ENCODE measurements at regions of chr12 and their contacts with region 1.

Region 1: GRCh38 chr12:15910864-15911721 is at the start of gene DERA:
- DNase-seq: peak; percentile 78
- H3K4me3 Mint-ChIP-seq: peak within 1 kb of the TSS; percentile 88
- H3K27ac Mint-ChIP-seq: peak within 1 kb of the TSS; percentile 88
- H3K4me1 Mint-ChIP-seq: peaks cover 5% of the 10 kb centered on the region
- H3K27me3 Mint-ChIP-seq: no peaks in the 10 kb centered on the region
- CTCF ChIP-seq: no peak
- total RNA-seq, gene DERA: 39.1 and 40.8 TPM in 2 replicates

Region 2: GRCh38 chr12:15393037-15393436 is 518.1 kb before region 1 on chr12:
- CTCF ChIA-PET with region 1: no interaction called
- POLR2A ChIA-PET with region 1: no interaction called
- intact Hi-C with region 1: no loop called
- DNase-seq: no peak
- H3K4me3 Mint-ChIP-seq: no peak overlapping the region
- H3K27ac Mint-ChIP-seq: no peak overlapping the region
- H3K4me1 Mint-ChIP-seq: peaks cover 5% of the 10 kb centered on the region
- H3K27me3 Mint-ChIP-seq: no peaks in the 10 kb centered on the region
- CTCF ChIP-seq: no peak

Region 3: GRCh38 chr12:15882118-15882971 is 28.7 kb before region 1 on chr12 and contains the start of gene STRAP:
- CTCF ChIA-PET with region 1: interaction called, 4 read pairs
- POLR2A ChIA-PET with region 1: interaction called, 71 read pairs
- intact Hi-C with region 1: no loop called
- DNase-seq: peak; percentile 96
- H3K4me3 Mint-ChIP-seq: peak within 1 kb of the TSS; percentile 92
- H3K27ac Mint-ChIP-seq: peak within 1 kb of the TSS; percentile 95
- H3K4me1 Mint-ChIP-seq: peaks cover 26% of the 10 kb centered on the region
- H3K27me3 Mint-ChIP-seq: no peaks in the 10 kb centered on the region
- CTCF ChIP-seq: no peak
- total RNA-seq, gene STRAP: 203 and 233 TPM in 2 replicates

Region 4: DNA sequence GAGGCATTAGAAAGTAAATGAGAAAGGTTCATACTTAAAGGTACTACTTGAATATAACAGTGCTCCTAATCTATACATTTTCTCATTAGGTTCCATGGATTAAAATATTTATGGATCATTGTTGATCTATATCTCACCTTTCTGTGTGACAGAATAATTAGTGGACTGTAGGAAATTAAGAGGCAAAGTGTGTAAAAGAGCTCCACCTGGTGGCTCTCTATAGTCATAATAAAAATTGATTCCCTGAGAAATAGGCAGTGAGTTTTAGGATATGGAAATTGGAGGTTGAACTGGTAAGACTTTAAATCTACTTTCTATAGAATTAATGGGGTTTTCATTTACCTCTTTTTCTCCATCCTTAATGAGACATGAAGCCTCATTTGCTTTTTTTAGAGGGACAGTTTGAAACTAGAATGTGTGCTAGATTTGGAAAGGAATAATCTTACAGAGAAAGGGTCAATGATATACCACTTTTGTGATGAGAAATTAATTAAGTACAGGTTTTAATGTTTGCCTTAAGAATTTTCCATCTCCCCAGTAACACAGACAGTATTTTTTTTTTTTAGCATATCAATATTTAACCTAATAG is 11.7 kb before region 1 on chr12:
- CTCF ChIA-PET with region 1: interaction called, 18 read pairs
- POLR2A ChIA-PET with region 1: interaction called, 16 read pairs
- intact Hi-C with region 1: no loop called
- DNase-seq: peak; percentile 59
- H3K4me3 Mint-ChIP-seq: no peak overlapping the region
- H3K27ac Mint-ChIP-seq: peak overlapping the region; percentile 16
- H3K4me1 Mint-ChIP-seq: no peaks in the 10 kb centered on the region
- H3K27me3 Mint-ChIP-seq: no peaks in the 10 kb centered on the region
- CTCF ChIP-seq: peak; percentile 59

Region 5: DNA sequence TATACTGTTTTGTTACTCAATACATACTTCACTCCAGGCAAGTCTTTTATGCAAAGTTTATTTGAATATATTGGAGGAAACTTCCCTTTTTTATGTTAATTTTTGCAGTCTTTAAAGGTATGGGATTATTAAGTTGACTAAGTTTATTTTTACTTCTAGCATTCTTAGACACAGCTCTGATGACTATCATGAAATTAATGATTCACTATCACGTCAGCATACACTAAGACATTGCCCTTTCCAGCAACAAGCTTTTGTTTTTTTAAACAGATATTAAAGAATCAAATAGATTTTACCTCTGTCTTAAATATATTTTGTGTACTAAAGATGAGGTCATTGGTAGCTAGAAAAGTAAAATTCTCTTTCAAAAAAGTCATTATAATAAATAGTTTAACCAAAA is 52.2 kb after region 1 on chr12:
- CTCF ChIA-PET with region 1: interaction called, 3 read pairs
- POLR2A ChIA-PET with region 1: interaction called, 11 read pairs
- intact Hi-C with region 1: no loop called
- DNase-seq: no peak
- H3K4me3 Mint-ChIP-seq: no peak overlapping the region
- H3K27ac Mint-ChIP-seq: no peak overlapping the region
- H3K4me1 Mint-ChIP-seq: peaks cover 7% of the 10 kb centered on the region
- H3K27me3 Mint-ChIP-seq: no peaks in the 10 kb centered on the region
- CTCF ChIP-seq: no peak

Measured in MCF 10A (cell line).